ENCODE measurements at regions of chrX and their contacts with region 1.

Region 1: GRCh38 chrX:100895365-100896075 is 21.4 kb upstream of the NOX1 start:
- DNase-seq: peak in 5 of 7 donors; percentile 20 to 54 (median 28)
- H3K4me3 ChIP-seq: no peak overlapping the region
- H3K27ac ChIP-seq: no peak overlapping the region
- H3K4me1 ChIP-seq: no peaks in the 10 kb centered on the region
- H3K27me3 ChIP-seq: peaks cover 3% of the 10 kb centered on the region
- CTCF ChIP-seq: peak in 4 of 6 experiments; percentile 35 to 48 (median 44)
- POLR2A ChIP-seq: no peak

Region 2: DNA sequence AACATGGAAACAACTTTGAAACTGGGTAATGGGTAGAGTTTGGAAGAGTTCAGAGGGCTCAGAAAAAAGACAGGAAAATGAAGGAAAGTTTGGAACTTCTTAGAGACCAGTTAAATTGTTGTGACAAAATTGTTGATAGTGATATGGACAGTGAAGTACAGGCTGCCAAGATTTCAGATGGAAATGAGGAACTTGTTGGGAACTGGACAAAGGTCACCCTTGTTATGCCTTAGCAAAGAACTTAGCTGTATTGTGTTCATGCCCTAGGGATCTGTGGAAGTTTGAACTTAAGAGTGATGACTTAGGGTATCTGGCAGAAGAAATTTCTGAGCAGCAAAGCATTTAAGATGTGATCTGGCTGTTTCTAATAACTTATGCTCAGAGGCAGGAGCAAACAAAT is 68.8 kb after region 1 on chrX:
- intact Hi-C with region 1: no loop called
- DNase-seq: no peak
- H3K4me3 ChIP-seq: no peak overlapping the region
- H3K27ac ChIP-seq: no peak overlapping the region
- H3K4me1 ChIP-seq: no peaks in the 10 kb centered on the region
- H3K27me3 ChIP-seq: no peaks in the 10 kb centered on the region
- CTCF ChIP-seq: no peak
- POLR2A ChIP-seq: no peak

Region 3: DNA sequence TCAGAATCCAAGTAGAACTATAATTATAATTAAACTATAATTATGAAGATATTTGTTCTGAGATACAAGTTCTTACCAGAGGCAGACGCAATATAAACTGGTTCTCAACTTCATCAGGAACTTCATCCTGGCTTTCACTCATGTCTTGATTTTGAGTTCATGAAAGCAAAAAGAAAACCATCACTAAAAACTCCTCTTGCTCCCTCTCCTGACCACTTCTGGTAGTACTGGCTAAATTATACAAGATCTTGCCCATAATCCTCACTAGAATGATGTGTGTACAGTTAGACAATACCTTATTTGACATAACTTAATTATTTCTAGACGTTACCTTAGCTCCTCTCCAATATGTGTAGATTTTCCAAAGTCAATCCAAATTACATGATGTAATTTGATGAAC is 391.9 kb after region 1 on chrX:
- intact Hi-C with region 1: loop called in 1 of 2 experiments (anchors 10 kb)
- DNase-seq: peak in 1 of 7 donors; percentile 4
- H3K4me3 ChIP-seq: no peak overlapping the region
- H3K27ac ChIP-seq: no peak overlapping the region
- H3K4me1 ChIP-seq: no peaks in the 10 kb centered on the region
- H3K27me3 ChIP-seq: peaks cover 28% of the 10 kb centered on the region
- CTCF ChIP-seq: peak; percentile 30 to 63 (median 50)
- POLR2A ChIP-seq: no peak